ENCODE measurements at regions of chr12 and their contacts with region 1.

Region 1: DNA sequence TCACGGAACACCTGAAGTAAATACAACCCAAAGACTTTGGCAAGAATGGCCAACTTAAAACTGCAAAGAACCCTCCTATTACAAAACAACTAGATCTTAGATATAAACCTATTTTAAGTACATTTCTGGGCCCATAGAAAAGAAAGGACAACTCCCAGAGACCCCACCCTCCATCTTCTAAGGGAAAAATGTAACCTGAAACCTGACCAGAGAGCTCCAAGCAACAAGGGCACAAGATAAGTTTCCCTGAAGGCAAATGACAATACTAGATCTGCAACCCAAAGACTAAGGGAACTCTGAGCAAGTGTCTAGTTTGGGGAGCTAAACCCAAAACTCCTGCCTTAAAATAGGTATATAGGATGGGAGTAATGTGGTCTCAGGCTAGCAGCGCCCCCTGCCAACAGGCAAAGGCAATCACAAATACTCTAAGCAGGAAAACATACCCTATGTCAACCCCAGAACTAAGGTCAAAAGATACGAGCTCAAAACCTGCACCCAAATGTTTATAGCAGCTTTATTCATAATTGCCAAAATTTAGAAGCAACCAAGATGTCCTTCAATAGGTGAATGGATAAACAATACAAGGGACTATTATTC is 218.9 kb downstream of the ITPR2 start:
- DNase-seq: peak; percentile 35
- H3K4me3 Mint-ChIP-seq: no peak overlapping the region
- H3K27ac Mint-ChIP-seq: no peak overlapping the region
- H3K4me1 Mint-ChIP-seq: no peaks in the 10 kb centered on the region
- H3K27me3 Mint-ChIP-seq: no peaks in the 10 kb centered on the region
- CTCF ChIP-seq: peak; percentile 52

Region 2: GRCh38 chr12:26246483-26247111 is 367.5 kb before region 1 on chr12:
- CTCF ChIA-PET with region 1: no interaction called
- intact Hi-C with region 1: no loop called
- DNase-seq: peak; percentile 87
- H3K4me3 Mint-ChIP-seq: peak overlapping the region; percentile 1
- H3K27ac Mint-ChIP-seq: peak overlapping the region; percentile 87
- H3K4me1 Mint-ChIP-seq: peaks cover 52% of the 10 kb centered on the region
- H3K27me3 Mint-ChIP-seq: no peaks in the 10 kb centered on the region
- CTCF ChIP-seq: no peak

Region 3: DNA sequence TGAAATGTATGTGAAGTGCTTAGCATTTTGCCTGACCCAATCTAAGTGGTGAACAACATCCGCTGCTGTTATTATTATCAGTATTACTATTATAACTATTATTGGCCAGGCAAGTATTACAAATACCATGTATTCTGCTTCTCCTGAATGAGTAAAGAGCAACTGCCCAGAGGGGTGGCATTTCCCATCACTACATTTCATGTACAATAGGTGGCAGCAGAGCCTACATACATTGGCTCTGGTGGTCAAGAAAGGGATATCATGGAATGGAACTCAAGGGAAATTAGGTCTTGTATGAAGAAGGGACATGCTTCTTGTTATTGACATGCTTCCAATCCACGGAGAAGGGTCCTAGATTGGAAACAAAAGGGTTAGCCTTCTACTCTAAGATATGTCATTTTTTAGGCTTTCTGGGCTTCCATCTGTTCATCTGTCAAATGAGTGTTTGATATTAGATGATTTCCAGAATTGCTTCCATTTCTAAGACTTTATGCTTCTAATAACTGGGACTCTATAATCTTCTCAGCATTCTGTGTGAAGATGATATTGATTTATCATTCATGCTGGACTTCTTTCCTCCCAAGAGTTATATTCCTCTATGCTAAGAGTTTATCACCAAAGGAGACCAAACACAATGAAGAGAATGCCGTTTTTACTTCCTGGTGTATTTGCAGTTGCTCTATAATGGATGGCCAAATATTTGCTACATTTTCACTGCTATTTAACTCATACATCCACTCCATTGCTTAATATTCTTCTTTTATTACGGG is 179.6 kb before region 1 on chr12:
- CTCF ChIA-PET with region 1: no interaction called
- intact Hi-C with region 1: loop called (anchors 1 kb)
- DNase-seq: peak; percentile 34
- H3K4me3 Mint-ChIP-seq: no peak overlapping the region
- H3K27ac Mint-ChIP-seq: no peak overlapping the region
- H3K4me1 Mint-ChIP-seq: peaks cover 11% of the 10 kb centered on the region
- H3K27me3 Mint-ChIP-seq: no peaks in the 10 kb centered on the region
- CTCF ChIP-seq: peak; percentile 78

Region 4: GRCh38 chr12:26642361-26642760 is 28.2 kb after region 1 on chr12:
- CTCF ChIA-PET with region 1: no interaction called
- intact Hi-C with region 1: no loop called
- DNase-seq: no peak
- H3K4me3 Mint-ChIP-seq: no peak overlapping the region
- H3K27ac Mint-ChIP-seq: no peak overlapping the region
- H3K4me1 Mint-ChIP-seq: peaks cover 9% of the 10 kb centered on the region
- H3K27me3 Mint-ChIP-seq: no peaks in the 10 kb centered on the region
- CTCF ChIP-seq: no peak

Region 5: GRCh38 chr12:27619308-27619707 is 1005.2 kb after region 1 on chr12:
- CTCF ChIA-PET with region 1: no interaction called
- intact Hi-C with region 1: no loop called
- DNase-seq: no peak
- H3K4me3 Mint-ChIP-seq: no peak overlapping the region
- H3K27ac Mint-ChIP-seq: no peak overlapping the region
- H3K4me1 Mint-ChIP-seq: peaks cover 60% of the 10 kb centered on the region
- H3K27me3 Mint-ChIP-seq: no peaks in the 10 kb centered on the region
- CTCF ChIP-seq: no peak